ENCODE measurements at regions of chr4 and their contacts with region 1.

Region 1: DNA sequence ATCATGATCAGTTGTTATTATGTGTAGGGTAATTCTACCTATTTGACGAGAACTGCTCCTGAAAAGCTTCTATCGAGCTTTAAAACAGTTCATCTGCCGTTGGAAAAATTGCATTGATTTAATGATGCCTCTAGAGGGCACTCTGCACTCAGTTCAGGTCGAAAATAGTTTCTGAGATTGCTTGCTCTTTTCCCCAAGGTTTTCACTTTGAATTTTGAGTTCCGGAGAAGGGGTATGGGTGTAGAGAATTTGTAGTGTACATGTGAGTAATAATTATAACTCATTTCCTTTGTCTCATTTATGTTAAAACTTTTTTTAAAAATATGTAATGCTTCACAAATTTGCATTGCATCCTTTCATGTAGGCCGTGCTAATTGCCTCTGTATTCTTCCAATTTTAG is 28.4 kb upstream of the TNIP3 start:
- DNase-seq: no peak
- H3K4me3 Mint-ChIP-seq: peak overlapping the region; percentile 43
- H3K27ac Mint-ChIP-seq: peak overlapping the region; percentile 62
- H3K4me1 Mint-ChIP-seq: peaks cover 51% of the 10 kb centered on the region
- H3K27me3 Mint-ChIP-seq: no peaks in the 10 kb centered on the region

Region 2: GRCh38 chr4:121150486-121150885 is 42.0 kb before region 1 on chr4:
- CTCF ChIA-PET with region 1: interaction called, 12 read pairs
- DNase-seq: no peak
- H3K4me3 Mint-ChIP-seq: no peak overlapping the region
- H3K27ac Mint-ChIP-seq: no peak overlapping the region
- H3K4me1 Mint-ChIP-seq: peaks cover 45% of the 10 kb centered on the region
- H3K27me3 Mint-ChIP-seq: no peaks in the 10 kb centered on the region

Region 3: GRCh38 chr4:121243485-121243884 is 51.0 kb after region 1 on chr4:
- CTCF ChIA-PET with region 1: interaction called, 97 read pairs
- DNase-seq: no peak
- H3K4me3 Mint-ChIP-seq: peak overlapping the region; percentile 36
- H3K27ac Mint-ChIP-seq: no peak overlapping the region
- H3K4me1 Mint-ChIP-seq: peaks cover 4% of the 10 kb centered on the region
- H3K27me3 Mint-ChIP-seq: no peaks in the 10 kb centered on the region

Region 4: DNA sequence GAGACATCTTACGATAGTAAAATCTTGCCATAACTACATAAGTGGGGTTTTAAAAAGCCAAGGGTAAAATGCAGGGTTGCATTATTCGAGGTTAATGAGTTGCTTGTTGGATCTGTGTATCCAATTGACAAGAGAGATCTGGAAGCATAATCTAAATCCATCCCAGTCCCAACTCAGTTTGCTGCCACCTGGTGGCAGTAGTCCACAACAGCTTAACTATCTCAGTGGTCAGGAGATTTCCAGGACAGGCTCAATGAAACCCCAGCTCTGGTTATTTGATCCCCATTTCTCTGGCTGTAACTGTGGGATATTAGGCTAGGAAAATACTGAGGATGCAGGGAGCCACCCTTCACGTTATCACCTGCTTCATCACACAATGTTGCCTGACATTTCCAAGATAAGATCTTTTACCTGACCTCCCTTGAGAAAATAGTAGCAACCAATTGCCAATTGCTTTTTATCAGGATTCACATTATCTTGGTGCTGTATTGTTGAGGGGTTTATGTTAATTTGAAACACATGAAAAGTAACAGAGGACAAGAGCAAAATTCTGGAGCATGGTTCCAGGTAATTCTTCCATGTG is 59.8 kb after region 1 on chr4:
- CTCF ChIA-PET with region 1: interaction called, 97 read pairs
- DNase-seq: peak; percentile 65
- H3K4me3 Mint-ChIP-seq: no peak overlapping the region
- H3K27ac Mint-ChIP-seq: no peak overlapping the region
- H3K4me1 Mint-ChIP-seq: peaks cover 33% of the 10 kb centered on the region
- H3K27me3 Mint-ChIP-seq: no peaks in the 10 kb centered on the region

Region 5: GRCh38 chr4:121307445-121308327 is 115.2 kb after region 1 on chr4:
- CTCF ChIA-PET with region 1: interaction called, 60 read pairs
- DNase-seq: peak; percentile 56
- H3K4me3 Mint-ChIP-seq: no peak overlapping the region
- H3K27ac Mint-ChIP-seq: no peak overlapping the region
- H3K4me1 Mint-ChIP-seq: peaks cover 12% of the 10 kb centered on the region
- H3K27me3 Mint-ChIP-seq: no peaks in the 10 kb centered on the region

Measured in activated naive CD4-positive, alpha-beta T cell treated with anti-CD3 and anti-CD28 coated beads, Interleukin-2, amount 10 ng/mL, durations not matched to agents 7 days and 5 days (primary cell).